ENCODE measurements at regions of chr17 and their contacts with region 1.

Region 1: DNA sequence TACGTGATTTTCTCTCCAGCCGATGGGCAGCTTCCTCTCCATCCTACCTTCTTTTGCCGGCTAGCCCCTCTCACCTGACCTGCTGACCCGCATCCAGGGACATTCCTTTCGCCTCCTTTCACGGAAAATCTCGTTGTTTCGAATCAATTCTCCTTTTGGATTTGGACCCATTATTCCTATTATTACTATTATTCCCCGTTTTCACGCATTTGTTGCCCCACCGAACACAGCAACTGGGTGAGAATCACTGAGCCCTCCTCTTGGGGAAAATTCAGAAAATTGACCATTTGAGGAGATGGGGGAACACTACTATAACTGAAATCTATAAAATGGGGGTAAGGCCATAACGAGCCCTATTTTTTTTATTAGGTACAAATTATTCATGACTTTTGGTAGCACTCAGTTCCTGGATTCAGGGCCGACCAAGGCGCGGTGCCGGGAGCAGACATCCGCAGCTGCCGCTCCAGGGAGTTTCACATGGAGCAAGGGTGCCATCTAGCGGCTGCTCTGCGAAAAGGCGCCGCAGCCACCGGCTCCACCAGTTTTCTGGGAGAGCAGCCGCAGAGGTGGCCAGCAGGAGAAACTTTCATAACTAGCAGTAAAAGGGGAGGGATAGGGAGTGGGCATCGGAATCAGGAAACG is 3.3 kb upstream of the HOXB8 start:
- DNase-seq: peak; percentile 95
- H3K4me3 ChIP-seq: no peak overlapping the region
- H3K27ac ChIP-seq: no peak overlapping the region
- H3K4me1 ChIP-seq: peaks cover 0 to 32% (median 26%) of the 10 kb centered on the region in 4 donors
- H3K27me3 ChIP-seq: peaks cover 79 to 100% (median 97%) of the 10 kb centered on the region in 3 donors
- CTCF ChIP-seq: peak; percentile 95 to 99 (median 96)
- EP300 ChIP-seq: no peak
- POLR2A ChIP-seq: no peak

Region 2: DNA sequence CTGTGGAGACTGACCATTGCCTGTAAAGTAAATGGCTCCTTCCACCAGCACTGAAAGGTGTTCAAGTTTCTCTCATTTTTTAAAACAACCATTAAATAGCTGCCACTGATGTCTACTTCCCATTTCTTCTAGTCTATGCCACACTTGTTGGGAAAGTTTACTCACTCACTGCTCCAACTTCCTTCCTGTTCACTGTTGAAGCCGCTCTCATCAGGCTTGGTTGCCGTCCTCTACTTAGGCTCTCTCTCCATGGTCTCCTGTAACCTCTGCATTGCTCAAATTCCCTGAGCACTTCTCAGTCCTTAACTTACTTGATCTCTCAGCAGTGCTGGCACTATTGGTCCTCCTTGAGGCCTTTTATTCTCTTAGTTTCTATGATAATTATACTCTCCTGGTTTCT is 478.4 kb before region 1 on chr17:
- intact Hi-C with region 1: no loop called
- DNase-seq: no peak
- H3K4me3 ChIP-seq: no peak overlapping the region
- H3K27ac ChIP-seq: no peak overlapping the region
- H3K4me1 ChIP-seq: no peaks in the 10 kb centered on the region
- H3K27me3 ChIP-seq: peaks cover 0 to 23% (median 8%) of the 10 kb centered on the region in 3 donors
- CTCF ChIP-seq: no peak
- EP300 ChIP-seq: no peak
- POLR2A ChIP-seq: no peak

Region 3: DNA sequence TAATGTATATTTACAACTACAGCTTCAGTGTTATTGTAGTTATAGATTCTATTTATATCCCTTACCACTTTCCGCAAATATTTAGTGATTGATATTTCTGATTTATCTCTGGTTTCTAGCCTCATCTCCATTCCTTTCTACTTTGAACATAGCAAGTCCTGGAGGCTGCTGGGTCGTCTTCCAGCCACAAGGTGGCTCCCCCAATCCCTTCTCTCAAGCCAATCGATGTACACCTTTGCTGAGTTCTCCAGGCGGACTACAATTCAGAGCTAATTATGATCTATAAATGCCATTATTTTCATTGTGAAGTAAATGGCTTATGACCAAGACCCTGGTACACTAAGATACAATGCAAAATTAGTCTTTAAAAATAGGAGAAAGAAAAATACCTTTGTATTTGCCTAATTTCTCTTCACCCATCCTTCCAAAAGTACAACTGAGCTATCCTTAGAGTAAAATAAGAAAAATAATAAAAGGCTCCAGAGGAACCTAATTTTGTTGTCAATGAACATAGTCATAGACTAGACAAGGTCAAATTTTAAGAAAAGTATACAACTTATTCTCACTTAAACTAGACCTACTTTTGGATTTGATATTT is 310.5 kb before region 1 on chr17:
- intact Hi-C with region 1: loop called (anchors 2 kb)
- DNase-seq: peak; percentile 69
- H3K4me3 ChIP-seq: no peak overlapping the region
- H3K27ac ChIP-seq: no peak overlapping the region
- H3K4me1 ChIP-seq: no peaks in the 10 kb centered on the region
- H3K27me3 ChIP-seq: peaks cover 16 to 99% (median 41%) of the 10 kb centered on the region in 3 donors
- CTCF ChIP-seq: peak; percentile 37 to 79 (median 58)
- EP300 ChIP-seq: no peak
- POLR2A ChIP-seq: no peak

Region 4: GRCh38 chr17:48335858-48336500 is 282.4 kb before region 1 on chr17:
- intact Hi-C with region 1: loop called (anchors 1 kb)
- DNase-seq: no peak
- H3K4me3 ChIP-seq: no peak overlapping the region
- H3K27ac ChIP-seq: no peak overlapping the region
- H3K4me1 ChIP-seq: no peaks in the 10 kb centered on the region
- H3K27me3 ChIP-seq: peaks cover 31 to 97% (median 75%) of the 10 kb centered on the region in 3 donors
- CTCF ChIP-seq: peak; percentile 30 to 75 (median 66)
- EP300 ChIP-seq: no peak
- POLR2A ChIP-seq: no peak

Region 5: GRCh38 chr17:48351831-48352332 is 266.5 kb before region 1 on chr17:
- intact Hi-C with region 1: loop called (anchors 5 kb)
- DNase-seq: no peak
- H3K4me3 ChIP-seq: no peak overlapping the region
- H3K27ac ChIP-seq: no peak overlapping the region
- H3K4me1 ChIP-seq: no peaks in the 10 kb centered on the region
- H3K27me3 ChIP-seq: peaks cover 0 to 5% (median 0%) of the 10 kb centered on the region in 3 donors
- CTCF ChIP-seq: peak; percentile 52 to 71 (median 68)
- EP300 ChIP-seq: no peak
- POLR2A ChIP-seq: no peak

Region 6: DNA sequence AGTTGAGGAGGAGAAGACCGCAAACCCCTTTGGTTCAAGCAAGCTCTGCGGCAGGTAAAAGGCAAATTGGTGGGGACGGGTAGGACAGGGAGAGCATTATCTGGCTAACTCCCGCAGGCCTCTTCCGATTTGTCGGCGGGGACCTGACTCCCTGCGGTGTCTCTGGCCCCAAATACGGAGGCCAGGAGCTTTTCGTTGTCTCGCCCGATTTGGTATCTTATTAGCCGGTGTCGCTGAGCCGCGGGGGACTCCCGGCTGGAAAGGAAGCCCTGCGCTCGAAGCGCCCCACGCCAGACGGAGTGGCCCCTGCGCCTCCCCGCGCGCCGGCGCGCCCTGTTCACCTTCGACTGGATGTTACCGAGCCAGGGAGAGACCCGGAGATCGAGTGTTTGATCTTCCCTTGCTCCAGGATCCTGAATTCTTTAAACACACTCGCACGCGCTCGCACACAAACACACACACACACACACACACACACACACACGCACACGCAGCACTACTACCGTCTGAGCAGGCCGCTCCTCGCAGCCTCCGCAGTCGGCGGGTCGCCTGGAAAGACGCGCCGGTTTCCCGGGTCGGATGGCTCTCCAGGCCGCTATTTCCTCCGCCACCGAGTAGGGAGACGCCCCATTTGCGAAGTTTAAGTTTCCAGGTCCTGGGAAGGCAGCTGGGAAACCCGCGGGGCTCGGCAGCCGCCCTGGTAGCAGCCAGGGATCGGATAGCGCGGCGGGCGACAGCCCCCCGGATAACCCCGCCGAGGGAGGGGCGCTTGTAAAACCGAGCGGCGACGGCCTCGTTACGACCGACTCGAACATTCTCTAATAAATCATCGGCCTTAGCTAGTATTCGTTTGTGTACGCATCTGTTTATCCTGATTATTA is 100.6 kb after region 1 on chr17:
- intact Hi-C with region 1: loop called (anchors 5 kb)
- DNase-seq: peak; percentile 54
- H3K4me3 ChIP-seq: peak overlapping the region in 2 of 4 donors; percentile 8 to 16
- H3K27ac ChIP-seq: peak overlapping the region in 2 of 4 donors; percentile 34 to 49
- H3K4me1 ChIP-seq: peaks cover 0 to 32% (median 28%) of the 10 kb centered on the region in 4 donors
- H3K27me3 ChIP-seq: peaks cover 68 to 97% (median 94%) of the 10 kb centered on the region in 3 donors
- CTCF ChIP-seq: no peak
- EP300 ChIP-seq: no peak
- POLR2A ChIP-seq: no peak

Region 7: DNA sequence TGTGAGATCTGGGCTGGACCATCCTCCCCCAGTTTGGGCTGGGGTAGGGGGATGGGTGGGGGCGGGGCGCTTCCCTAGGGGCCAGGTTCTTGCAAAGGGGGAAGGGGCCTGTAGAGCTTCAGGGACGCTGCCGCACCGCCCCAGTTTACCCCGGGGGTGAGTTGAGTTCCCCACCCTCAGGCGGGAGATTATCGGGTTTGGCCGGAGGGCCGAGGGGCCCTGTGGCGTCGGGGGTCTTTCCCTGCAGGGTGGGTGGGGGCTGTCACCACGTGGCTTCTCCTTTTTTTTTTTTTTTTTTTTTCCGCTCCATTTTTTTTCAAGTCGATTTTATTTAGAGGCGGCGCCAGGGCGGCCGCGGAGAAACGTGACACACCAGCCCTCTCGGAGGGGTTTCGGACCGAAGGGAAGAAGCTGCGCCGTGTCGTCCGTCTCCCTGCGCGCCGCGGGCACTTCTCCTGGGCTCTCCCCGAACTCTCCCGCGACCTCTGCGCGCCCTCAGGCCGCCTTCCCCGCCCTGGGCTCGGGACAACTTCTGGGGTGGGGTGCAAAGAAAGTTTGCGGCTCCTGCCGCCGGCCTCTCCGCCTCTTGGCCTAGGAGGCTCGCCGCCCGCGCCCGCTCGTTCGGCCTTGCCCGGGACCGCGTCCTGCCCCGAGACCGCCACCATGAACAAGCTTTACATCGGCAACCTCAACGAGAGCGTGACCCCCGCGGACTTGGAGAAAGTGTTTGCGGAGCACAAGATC is 378.9 kb after region 1 on chr17 and contains the start of gene IGF2BP1:
- intact Hi-C with region 1: loop called (anchors 10 kb)
- DNase-seq: no peak
- H3K4me3 ChIP-seq: peak within 1 kb of the TSS in 2 of 4 donors; percentile 9 to 15
- H3K27ac ChIP-seq: no peak within 1 kb of the TSS
- H3K4me1 ChIP-seq: peaks cover 0 to 31% (median 27%) of the 10 kb centered on the region in 4 donors
- H3K27me3 ChIP-seq: peaks cover 71 to 100% (median 99%) of the 10 kb centered on the region in 3 donors
- CTCF ChIP-seq: no peak
- EP300 ChIP-seq: no peak
- POLR2A ChIP-seq: no peak
- total RNA-seq, gene IGF2BP1: 0.14 to 0.36 TPM in 2 of 4 donors, not detected in the others

Measured in sigmoid colon (tissue), 7 donors.